ENCODE measurements at regions of chr6 and their contacts with region 1.

Region 1: GRCh38 chr6:105646391-105646867 is 243.5 kb upstream of the PREP start:
- DNase-seq: peak; percentile 70
- H3K4me3 Mint-ChIP-seq: no peak overlapping the region
- H3K27ac Mint-ChIP-seq: peak overlapping the region; percentile 85
- H3K4me1 Mint-ChIP-seq: peaks cover 78% of the 10 kb centered on the region
- H3K27me3 Mint-ChIP-seq: peaks cover 4% of the 10 kb centered on the region

Region 2: GRCh38 chr6:104987218-104987617 is 659.2 kb before region 1 on chr6:
- intact Hi-C with region 1: no loop called
- DNase-seq: no peak
- H3K4me3 Mint-ChIP-seq: no peak overlapping the region
- H3K27ac Mint-ChIP-seq: no peak overlapping the region
- H3K4me1 Mint-ChIP-seq: no peaks in the 10 kb centered on the region
- H3K27me3 Mint-ChIP-seq: peaks cover 10% of the 10 kb centered on the region

Region 3: GRCh38 chr6:105135056-105135455 is 511.4 kb before region 1 on chr6:
- intact Hi-C with region 1: no loop called
- DNase-seq: no peak
- H3K4me3 Mint-ChIP-seq: no peak overlapping the region
- H3K27ac Mint-ChIP-seq: no peak overlapping the region
- H3K4me1 Mint-ChIP-seq: peaks cover 5% of the 10 kb centered on the region
- H3K27me3 Mint-ChIP-seq: peaks cover 54% of the 10 kb centered on the region

Region 4: GRCh38 chr6:105484238-105485161 is 161.9 kb before region 1 on chr6:
- intact Hi-C with region 1: loop called (anchors 1 kb)
- DNase-seq: no peak
- H3K4me3 Mint-ChIP-seq: peak overlapping the region; percentile 27
- H3K27ac Mint-ChIP-seq: peak overlapping the region; percentile 59
- H3K4me1 Mint-ChIP-seq: peaks cover 72% of the 10 kb centered on the region
- H3K27me3 Mint-ChIP-seq: peaks cover 7% of the 10 kb centered on the region

Region 5: GRCh38 chr6:105601541-105602236 is 44.7 kb before region 1 on chr6:
- intact Hi-C with region 1: loop called (anchors 1 kb)
- DNase-seq: peak; percentile 41
- H3K4me3 Mint-ChIP-seq: peak overlapping the region; percentile 64
- H3K27ac Mint-ChIP-seq: peak overlapping the region; percentile 89
- H3K4me1 Mint-ChIP-seq: peaks cover 37% of the 10 kb centered on the region
- H3K27me3 Mint-ChIP-seq: peaks cover 2% of the 10 kb centered on the region

Region 6: DNA sequence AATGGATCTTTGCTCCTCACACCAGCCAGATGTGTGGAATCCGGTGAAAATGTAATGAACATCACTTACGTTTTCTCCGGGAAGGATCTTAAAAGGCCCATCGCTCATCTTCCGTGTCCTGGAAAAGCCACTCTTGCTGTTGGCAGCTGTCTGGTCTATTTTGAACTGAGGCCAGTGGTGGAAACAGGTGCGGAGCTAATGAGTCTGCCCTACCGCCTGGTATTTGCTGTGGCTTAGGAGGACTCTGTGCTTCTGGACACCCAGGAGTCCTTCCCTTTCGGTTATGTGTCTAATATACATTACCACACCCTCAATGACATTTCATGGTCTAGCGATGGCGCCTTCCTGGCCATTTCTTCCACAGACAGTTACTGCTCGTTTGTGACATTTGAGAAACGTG is 20.6 kb after region 1 on chr6:
- intact Hi-C with region 1: no loop called
- DNase-seq: no peak
- H3K4me3 Mint-ChIP-seq: no peak overlapping the region
- H3K27ac Mint-ChIP-seq: no peak overlapping the region
- H3K4me1 Mint-ChIP-seq: peaks cover 6% of the 10 kb centered on the region
- H3K27me3 Mint-ChIP-seq: peaks cover 8% of the 10 kb centered on the region

Region 7: GRCh38 chr6:105733565-105734162 is 87.2 kb after region 1 on chr6:
- intact Hi-C with region 1: loop called (anchors 1 kb)
- DNase-seq: no peak
- H3K4me3 Mint-ChIP-seq: no peak overlapping the region
- H3K27ac Mint-ChIP-seq: no peak overlapping the region
- H3K4me1 Mint-ChIP-seq: peaks cover 44% of the 10 kb centered on the region
- H3K27me3 Mint-ChIP-seq: peaks cover 3% of the 10 kb centered on the region

Region 8: GRCh38 chr6:105810105-105810921 is 163.9 kb after region 1 on chr6:
- intact Hi-C with region 1: loop called (anchors 1 kb)
- DNase-seq: peak; percentile 73
- H3K4me3 Mint-ChIP-seq: peak overlapping the region; percentile 58
- H3K27ac Mint-ChIP-seq: peak overlapping the region; percentile 92
- H3K4me1 Mint-ChIP-seq: peaks cover 76% of the 10 kb centered on the region
- H3K27me3 Mint-ChIP-seq: no peaks in the 10 kb centered on the region

Region 9: GRCh38 chr6:105862936-105863607 is 216.6 kb after region 1 on chr6:
- intact Hi-C with region 1: no loop called
- DNase-seq: no peak
- H3K4me3 Mint-ChIP-seq: no peak overlapping the region
- H3K27ac Mint-ChIP-seq: no peak overlapping the region
- H3K4me1 Mint-ChIP-seq: peaks cover 8% of the 10 kb centered on the region
- H3K27me3 Mint-ChIP-seq: peaks cover 25% of the 10 kb centered on the region

Region 10: DNA sequence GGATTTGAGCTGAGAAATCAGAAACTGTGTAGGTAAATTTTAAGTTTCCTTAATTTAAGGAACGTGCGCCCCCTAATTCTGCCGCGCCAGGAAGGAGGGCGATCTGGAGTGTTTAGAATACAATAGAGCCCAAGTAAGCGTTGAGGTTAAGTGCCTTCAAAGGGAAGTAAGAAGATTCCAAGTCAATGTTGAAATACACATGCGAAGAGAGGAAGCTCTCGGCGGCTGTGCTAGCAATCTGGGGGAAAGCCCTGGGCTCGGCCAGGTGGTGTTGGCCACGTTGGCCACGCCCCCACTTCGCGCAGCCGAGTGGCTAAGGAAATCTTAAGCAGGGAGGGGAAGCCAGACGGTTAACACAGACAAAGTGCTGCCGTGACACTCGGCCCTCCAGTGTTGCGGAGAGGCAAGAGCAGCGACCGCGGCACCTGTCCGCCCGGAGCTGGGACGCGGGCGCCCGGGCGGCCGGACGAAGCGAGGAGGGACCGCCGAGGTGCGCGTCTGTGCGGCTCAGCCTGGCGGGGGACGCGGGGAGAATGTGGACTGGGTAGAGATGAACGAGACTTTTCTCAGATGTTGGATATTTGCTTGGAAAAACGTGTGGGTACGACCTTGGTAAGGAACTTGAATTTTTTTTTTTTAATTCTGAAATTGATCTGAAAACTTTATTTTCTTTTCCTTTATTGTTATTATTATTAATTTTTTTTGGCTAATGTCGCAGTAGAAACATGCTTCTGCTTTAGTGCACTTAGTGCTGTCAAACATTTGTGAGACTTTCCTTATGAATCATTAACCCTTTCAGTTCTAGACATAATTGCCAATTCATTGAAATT is 439.8 kb after region 1 on chr6 and contains the start of gene PRDM1:
- intact Hi-C with region 1: loop called (anchors 1 kb)
- DNase-seq: peak; percentile 83
- H3K4me3 Mint-ChIP-seq: peak within 1 kb of the TSS; percentile 96
- H3K27ac Mint-ChIP-seq: peak within 1 kb of the TSS; percentile 80
- H3K4me1 Mint-ChIP-seq: peaks cover 86% of the 10 kb centered on the region
- H3K27me3 Mint-ChIP-seq: peaks cover 7% of the 10 kb centered on the region
- total RNA-seq, gene PRDM1: 74.1 and 78.8 TPM in 2 replicates

Region 11: DNA sequence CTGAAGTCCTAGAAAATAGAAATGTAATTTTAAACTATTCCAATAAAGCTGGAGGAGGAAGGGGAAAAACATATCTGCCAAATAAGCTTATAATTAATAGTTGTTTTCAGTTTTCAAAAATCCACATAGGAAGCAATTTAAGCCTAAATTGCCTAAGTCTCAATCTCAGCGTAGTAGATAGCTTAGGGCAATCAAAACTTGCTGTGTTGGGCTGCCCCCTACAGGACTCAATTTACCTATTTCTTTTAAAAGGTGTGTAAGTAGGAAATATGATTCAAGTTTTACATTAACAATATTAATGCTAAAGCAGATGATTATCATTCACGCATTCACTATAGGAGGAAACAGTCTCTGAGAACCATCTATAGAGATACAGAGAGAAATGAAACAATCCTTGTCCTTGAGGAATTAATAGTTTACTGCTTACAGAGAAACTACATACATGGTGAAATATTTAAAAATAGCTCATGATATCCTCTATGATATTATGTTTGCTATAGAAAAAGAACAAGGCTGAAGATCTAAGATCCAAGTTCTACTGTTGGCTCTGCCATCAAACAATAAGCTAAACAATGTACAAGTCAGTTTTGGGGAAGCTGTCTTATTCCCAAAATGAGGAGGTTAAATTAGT is 577.0 kb after region 1 on chr6:
- intact Hi-C with region 1: loop called (anchors 1 kb)
- DNase-seq: peak; percentile 54
- H3K4me3 Mint-ChIP-seq: no peak overlapping the region
- H3K27ac Mint-ChIP-seq: no peak overlapping the region
- H3K4me1 Mint-ChIP-seq: peaks cover 59% of the 10 kb centered on the region
- H3K27me3 Mint-ChIP-seq: no peaks in the 10 kb centered on the region

Measured in activated T-helper 1 cell treated with anti-CD3 and anti-CD28 coated beads, Interleukin-12 subunit alpha, Interleukin-12 subunit beta, Interleukin-2, Interleukin-4 antibody, amounts not matched to agents 30 ng/mL and 10 ng/mL and 1 ng/mL, durations not matched to agents 14 hours and 24 hours and 36 hours (primary cell).